ENCODE measurements at regions of chr6 and their contacts with region 1.

Region 1: GRCh38 chr6:3977875-3978711 is 100.8 kb downstream of the FAM217A start:
- DNase-seq: peak; percentile 84
- H3K4me3 ChIP-seq: no peak overlapping the region
- CTCF ChIP-seq: peak; percentile 46

Region 2: DNA sequence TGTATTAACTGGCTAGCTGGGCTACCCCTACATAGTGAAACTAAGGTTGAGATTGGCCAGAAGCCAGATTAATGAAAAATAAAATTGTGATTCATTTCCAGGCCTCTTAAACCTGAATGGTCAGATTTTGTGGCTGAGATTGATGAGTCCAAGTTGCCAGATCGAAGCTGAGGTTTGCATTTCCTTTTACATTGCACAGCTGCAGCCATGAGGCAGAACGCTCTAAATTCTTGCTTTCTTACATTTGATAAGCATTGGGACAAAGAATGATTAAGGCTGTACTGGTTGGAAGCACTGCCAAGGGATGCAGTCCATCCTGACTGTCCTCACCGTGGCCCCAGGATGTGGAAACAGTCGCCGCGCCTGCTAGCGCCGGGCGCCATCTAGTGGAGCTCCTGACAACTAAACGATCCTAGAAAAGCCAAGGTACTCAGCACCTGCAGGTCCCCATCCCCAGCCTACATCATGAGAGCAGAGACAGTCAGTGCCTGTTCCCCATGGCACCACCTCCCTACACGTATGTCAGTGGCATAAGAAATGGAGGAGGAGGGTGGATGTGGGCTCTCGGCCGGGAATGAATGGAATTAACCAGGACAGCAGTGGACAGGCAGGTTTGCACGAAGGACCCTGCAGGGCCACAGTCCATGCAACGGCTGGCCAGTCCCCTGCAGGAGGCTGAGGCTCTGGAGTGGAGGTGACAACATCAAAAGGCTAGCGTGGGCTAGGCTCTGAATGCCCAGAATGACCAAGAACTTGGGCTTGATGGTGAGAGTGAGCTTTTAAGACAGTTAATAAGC is 245.6 kb before region 1 on chr6:
- CTCF ChIA-PET with region 1: interaction called, 13 read pairs
- POLR2A ChIA-PET with region 1: no interaction called
- DNase-seq: no peak
- H3K4me3 ChIP-seq: no peak overlapping the region
- CTCF ChIP-seq: peak; percentile 84

Region 3: DNA sequence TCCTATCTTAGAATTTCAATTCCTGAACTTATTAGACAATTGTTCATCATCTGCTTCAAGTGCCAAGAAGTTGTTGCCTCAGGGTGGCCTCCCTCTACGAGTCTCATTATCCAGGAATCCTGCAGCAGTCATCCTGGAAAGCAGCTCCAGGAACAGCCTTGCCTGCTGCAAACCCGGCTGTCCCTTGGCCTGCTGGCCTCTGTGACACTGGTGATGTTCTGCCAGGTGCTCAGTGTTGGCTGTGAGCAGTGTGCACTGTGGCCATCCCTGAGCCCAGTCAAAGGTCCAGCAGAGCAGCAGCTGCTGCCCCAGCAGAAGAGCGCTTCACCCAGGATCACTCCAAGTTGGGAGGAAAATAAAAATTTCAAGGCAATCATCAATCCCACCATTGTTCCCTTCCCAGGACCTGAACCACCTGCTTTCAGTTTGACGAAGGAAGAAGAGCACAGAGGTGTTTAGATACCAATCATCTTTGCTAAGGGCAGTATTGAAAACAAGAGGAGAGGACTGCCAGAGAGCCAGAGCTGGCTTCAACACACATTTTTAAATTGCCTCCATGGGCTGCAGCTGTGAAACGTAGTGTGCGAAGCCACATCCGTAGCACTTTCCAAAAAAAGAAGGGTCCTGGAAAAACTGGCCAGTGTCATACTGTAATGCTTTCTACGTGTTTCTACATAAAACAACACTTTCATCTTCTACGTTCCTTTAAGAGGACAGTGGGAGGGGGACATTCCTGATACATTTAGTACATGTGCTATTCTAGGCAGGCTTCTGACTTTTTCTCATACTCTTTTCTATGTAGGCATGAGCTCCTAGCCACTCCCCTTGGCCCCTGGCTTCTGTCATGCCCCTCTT is 136.2 kb before region 1 on chr6:
- CTCF ChIA-PET with region 1: interaction called, 164 read pairs
- POLR2A ChIA-PET with region 1: no interaction called
- DNase-seq: peak; percentile 67
- H3K4me3 ChIP-seq: no peak overlapping the region
- CTCF ChIP-seq: no peak

Region 4: DNA sequence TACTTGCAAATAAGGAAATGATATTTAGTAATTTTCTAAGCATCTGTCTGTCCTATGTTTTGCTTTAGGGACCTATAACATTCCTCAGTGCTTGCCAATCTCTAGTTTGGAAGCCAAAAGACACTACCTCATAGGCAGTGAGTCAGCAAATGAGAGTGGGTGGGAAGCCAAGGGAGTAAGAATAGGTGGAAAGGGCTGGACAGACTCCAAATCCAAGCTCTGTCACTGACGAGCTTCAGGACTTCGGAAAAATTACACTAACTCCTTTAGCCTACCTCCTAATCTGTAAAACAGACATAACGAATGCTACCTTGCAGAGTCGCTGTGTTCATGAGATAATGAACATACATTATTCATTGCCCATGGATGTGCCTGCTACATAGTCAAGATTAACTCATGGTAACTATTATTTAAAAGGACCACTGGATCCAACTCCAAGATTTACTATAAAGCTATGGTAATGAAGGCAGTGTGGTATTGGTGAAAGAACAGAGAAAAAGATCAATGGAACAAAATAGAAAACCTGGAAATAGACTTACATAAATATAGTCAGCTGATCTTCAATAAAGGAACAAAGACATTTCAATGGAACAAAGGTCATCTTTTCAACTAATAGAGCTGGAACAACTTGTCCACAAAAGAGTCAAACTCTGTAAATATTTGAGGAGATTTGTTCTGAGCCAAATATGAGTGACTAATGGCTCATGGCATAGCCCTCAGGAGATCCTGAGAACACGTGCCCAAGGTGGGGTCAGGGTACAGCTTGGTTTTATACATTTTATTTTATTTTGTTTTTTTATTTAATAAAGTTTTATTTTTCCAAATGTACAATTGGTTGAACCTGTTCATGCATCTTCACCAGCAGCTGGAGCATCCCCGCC is 64.8 kb before region 1 on chr6:
- CTCF ChIA-PET with region 1: interaction called, 10 read pairs
- POLR2A ChIA-PET with region 1: no interaction called
- DNase-seq: peak; percentile 97
- H3K4me3 ChIP-seq: no peak overlapping the region
- CTCF ChIP-seq: no peak

Region 5: DNA sequence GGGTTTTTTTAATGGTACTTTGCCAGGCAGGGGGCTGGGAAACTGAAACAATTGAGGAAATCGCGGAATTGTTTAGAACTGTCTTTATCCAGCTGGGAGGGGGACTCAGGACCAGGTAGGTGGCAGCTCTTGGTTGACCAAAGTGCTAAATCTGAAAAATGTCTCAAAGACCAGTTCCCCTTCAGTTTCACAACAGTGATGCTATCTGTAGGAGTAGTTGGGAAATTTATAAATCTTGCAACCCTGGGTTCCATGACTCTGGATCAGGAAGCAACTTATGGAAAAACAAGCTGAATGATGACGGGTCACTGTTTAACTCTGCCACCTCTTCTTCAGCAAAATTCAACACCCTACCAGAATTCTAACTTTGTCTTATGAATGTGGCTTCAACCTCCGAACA is 29.2 kb before region 1 on chr6:
- CTCF ChIA-PET with region 1: interaction called, 16 read pairs
- POLR2A ChIA-PET with region 1: no interaction called
- DNase-seq: no peak
- H3K4me3 ChIP-seq: no peak overlapping the region
- CTCF ChIP-seq: no peak

Region 6: DNA sequence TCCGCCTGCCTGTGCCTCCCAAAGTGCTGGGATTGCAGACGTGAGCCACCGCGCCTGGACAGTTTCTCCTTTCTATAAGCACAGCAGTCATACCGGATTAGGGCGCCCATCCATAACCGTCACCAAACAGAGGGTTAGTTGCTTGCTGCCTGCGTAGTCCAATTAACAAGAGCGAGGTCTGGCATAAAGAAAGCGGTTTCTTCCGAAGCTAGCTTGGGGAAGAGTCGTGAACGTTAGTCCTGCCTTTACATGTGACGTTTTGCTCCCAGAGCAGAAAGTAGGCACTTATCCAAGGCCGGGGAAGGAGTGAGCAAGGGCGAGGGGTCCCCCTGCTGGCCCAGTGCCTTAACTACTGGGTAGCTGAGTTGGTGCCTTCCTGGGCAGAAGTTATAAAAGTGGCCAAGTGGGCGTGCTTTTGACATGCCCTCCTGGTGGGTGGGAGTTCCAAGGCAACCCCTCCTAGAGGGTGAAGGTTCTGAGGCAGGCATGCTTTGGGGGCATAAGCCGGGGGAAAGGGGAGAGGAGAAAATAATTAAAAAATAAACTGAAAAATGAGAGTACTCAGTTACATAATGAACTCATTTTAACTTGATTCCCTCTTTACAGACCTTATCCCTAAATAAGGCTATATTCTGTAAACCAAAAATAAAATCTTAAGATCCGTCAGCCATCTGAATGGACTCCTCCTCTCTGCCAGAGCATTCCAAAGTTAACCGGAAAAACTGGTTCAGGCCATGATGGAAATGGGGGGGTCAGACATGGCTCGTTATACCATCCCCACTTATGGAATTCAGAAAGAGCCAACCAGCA is 12.8 kb after region 1 on chr6:
- CTCF ChIA-PET with region 1: interaction called, 77 read pairs
- POLR2A ChIA-PET with region 1: no interaction called
- DNase-seq: peak; percentile 50
- H3K4me3 ChIP-seq: peak overlapping the region; percentile 23
- CTCF ChIP-seq: peak; percentile 94

Region 7: GRCh38 chr6:4413073-4413472 is 435.0 kb after region 1 on chr6:
- CTCF ChIA-PET with region 1: no interaction called
- POLR2A ChIA-PET with region 1: no interaction called
- DNase-seq: peak; percentile 34
- H3K4me3 ChIP-seq: no peak overlapping the region
- CTCF ChIP-seq: no peak

Measured in AG04449 (cell line).